H1 (cell line): ENCODE measurements at regions of chr14 and their contacts with region 1.

Region 1: GRCh38 chr14:22200977-22201605 is 387.9 kb downstream of the DAD1 start:
- DNase-seq: no peak
- H3K4me3 ChIP-seq: no peak overlapping the region
- H3K27ac ChIP-seq: no peak overlapping the region
- H3K4me1 ChIP-seq: no peaks in the 10 kb centered on the region; a peak in 1 of 7 replicates
- H3K27me3 ChIP-seq: no peaks in the 10 kb centered on the region
- CTCF ChIP-seq: peak in 2 of 3 experiments; percentile 74 to 85; a peak in 3 of 4 replicates
- EP300 ChIP-seq: no peak
- POLR2A ChIP-seq: no peak
- RAD21 ChIP-seq: peak; percentile 56 to 68

Region 2: GRCh38 chr14:22163051-22163450 is 38.0 kb before region 1 on chr14:
- CTCF ChIA-PET with region 1: interaction called, 19 read pairs
- POLR2A ChIA-PET with region 1: no interaction called
- DNase-seq: no peak
- H3K4me3 ChIP-seq: no peak overlapping the region
- H3K27ac ChIP-seq: no peak overlapping the region
- H3K4me1 ChIP-seq: no peaks in the 10 kb centered on the region; a peak in 2 of 7 replicates
- H3K27me3 ChIP-seq: no peaks in the 10 kb centered on the region
- CTCF ChIP-seq: peak in 2 of 3 experiments; percentile 17 to 34; a peak in 2 of 4 replicates
- EP300 ChIP-seq: no peak
- POLR2A ChIP-seq: no peak
- RAD21 ChIP-seq: peak; percentile 38 to 41; a peak in 3 of 4 replicates

Region 3: GRCh38 chr14:22168092-22168955 is 32.8 kb before region 1 on chr14:
- CTCF ChIA-PET with region 1: interaction called, 19 read pairs
- POLR2A ChIA-PET with region 1: no interaction called
- DNase-seq: no peak
- H3K4me3 ChIP-seq: no peak overlapping the region
- H3K27ac ChIP-seq: no peak overlapping the region
- H3K4me1 ChIP-seq: peaks cover 0 to 6% (median 2%) of the 10 kb centered on the region in 4 experiments; a peak in 3 of 7 replicates
- H3K27me3 ChIP-seq: no peaks in the 10 kb centered on the region
- CTCF ChIP-seq: peak in 1 of 3 experiments; percentile 32; a peak in 1 of 4 replicates
- EP300 ChIP-seq: no peak
- POLR2A ChIP-seq: no peak
- RAD21 ChIP-seq: peak in 1 of 2 experiments; percentile 11; a peak in 1 of 4 replicates

Region 4: DNA sequence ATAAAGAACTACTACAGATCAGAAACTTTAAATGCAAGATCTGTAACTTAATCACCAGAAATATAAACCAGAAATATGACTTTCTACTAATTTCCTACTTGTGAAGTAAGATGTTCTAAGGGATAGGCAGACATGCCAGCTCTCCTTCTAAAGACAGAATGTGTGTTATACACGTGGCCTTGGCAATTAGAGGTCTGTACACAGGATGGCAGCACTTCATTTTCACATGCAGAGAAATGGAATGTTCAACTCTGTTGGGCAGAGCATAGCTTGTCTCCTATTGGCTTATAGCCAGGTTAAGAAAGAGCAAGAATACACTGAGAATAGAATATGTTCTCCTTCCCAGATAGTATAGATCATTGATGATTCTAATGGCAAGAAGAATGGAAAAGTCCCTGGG is 15.9 kb before region 1 on chr14:
- CTCF ChIA-PET with region 1: interaction called, 10 read pairs
- POLR2A ChIA-PET with region 1: no interaction called
- DNase-seq: no peak
- H3K4me3 ChIP-seq: no peak overlapping the region
- H3K27ac ChIP-seq: no peak overlapping the region
- H3K4me1 ChIP-seq: 0 out of 7 replicates have a peak, but pooled peaks cover 0 to 2% (median 0%) of the 10 kb centered on the region in 4 experiments
- H3K27me3 ChIP-seq: no peaks in the 10 kb centered on the region
- CTCF ChIP-seq: peak in 2 of 3 experiments; percentile 15 to 25; a peak in 2 of 4 replicates
- EP300 ChIP-seq: no peak
- POLR2A ChIP-seq: no peak
- RAD21 ChIP-seq: peak; percentile 8 to 18; a peak in 2 of 4 replicates

Region 5: DNA sequence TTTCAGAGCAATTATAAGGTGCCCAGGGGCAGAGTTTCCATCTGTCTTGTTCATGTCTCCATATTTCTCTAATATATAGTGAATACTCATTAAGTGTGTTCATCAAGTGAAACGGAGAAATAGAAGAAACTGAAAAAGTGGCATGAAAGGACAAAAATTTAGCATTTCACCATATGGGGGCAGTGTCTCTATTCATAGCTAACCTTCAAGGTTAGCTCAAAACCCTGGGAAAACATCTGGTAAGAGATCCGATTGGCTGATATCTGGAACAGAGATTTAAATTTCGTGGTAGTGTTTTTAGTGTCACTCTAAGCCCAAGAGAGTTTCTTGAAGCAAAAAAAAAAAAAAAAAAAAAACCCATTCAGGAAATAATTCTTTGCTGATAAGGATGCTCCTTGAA is 20.4 kb after region 1 on chr14:
- CTCF ChIA-PET with region 1: interaction called, 24 read pairs
- POLR2A ChIA-PET with region 1: no interaction called
- DNase-seq: no peak
- H3K4me3 ChIP-seq: no peak overlapping the region
- H3K27ac ChIP-seq: no peak overlapping the region
- H3K4me1 ChIP-seq: no peaks in the 10 kb centered on the region
- H3K27me3 ChIP-seq: no peaks in the 10 kb centered on the region
- CTCF ChIP-seq: peak in 1 of 3 experiments; percentile 38; a peak in 2 of 4 replicates
- EP300 ChIP-seq: no peak
- POLR2A ChIP-seq: no peak
- RAD21 ChIP-seq: peak in 1 of 2 experiments; percentile 14; a peak in 1 of 4 replicates

Region 6: DNA sequence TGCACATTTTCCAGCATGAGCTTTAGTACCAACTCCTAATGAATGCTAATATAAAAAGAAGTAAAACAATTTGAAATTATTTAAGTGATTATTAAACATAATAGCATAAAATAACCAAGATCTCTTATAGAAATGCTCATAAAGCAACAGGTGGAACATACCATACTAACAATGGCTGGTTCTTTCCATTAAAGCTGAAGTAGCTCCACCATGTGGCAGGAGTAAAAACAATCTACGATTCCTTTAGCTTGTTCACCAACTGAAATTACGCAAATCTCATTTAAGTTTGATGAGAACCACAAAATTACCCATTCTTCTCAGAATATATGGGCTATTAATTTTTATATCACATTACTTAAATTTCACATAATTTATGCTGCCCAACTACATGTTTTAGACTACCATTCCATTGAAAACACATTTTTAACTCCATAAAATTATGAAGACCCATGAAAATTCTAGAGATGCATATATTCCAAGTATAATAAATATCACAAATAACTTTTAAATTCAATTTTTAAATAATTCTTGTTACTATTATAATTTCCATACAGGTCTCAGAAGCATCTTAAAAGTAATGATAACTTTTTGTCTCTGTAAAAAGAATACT is 174.3 kb after region 1 on chr14:
- CTCF ChIA-PET with region 1: interaction called, 15 read pairs
- POLR2A ChIA-PET with region 1: no interaction called
- DNase-seq: no peak
- H3K4me3 ChIP-seq: no peak overlapping the region
- H3K27ac ChIP-seq: no peak overlapping the region
- H3K4me1 ChIP-seq: no peaks in the 10 kb centered on the region
- H3K27me3 ChIP-seq: no peaks in the 10 kb centered on the region
- CTCF ChIP-seq: peak in 2 of 3 experiments; percentile 51 to 55; a peak in 2 of 4 replicates
- EP300 ChIP-seq: no peak
- POLR2A ChIP-seq: no peak
- RAD21 ChIP-seq: peak; percentile 68 to 74

Region 7: GRCh38 chr14:22434030-22434429 is 232.9 kb after region 1 on chr14:
- CTCF ChIA-PET with region 1: no interaction called
- POLR2A ChIA-PET with region 1: no interaction called
- DNase-seq: no peak
- H3K4me3 ChIP-seq: no peak overlapping the region
- H3K27ac ChIP-seq: no peak overlapping the region
- H3K4me1 ChIP-seq: no peaks in the 10 kb centered on the region
- H3K27me3 ChIP-seq: no peaks in the 10 kb centered on the region
- CTCF ChIP-seq: no peak; a peak in 1 of 4 replicates
- EP300 ChIP-seq: no peak
- POLR2A ChIP-seq: no peak
- RAD21 ChIP-seq: peak in 1 of 2 experiments; percentile 6; a peak in 1 of 4 replicates

Region 8: GRCh38 chr14:22748631-22749068 is 547.6 kb after region 1 on chr14:
- CTCF ChIA-PET with region 1: no interaction called
- POLR2A ChIA-PET with region 1: no interaction called
- DNase-seq: no peak
- H3K4me3 ChIP-seq: no peak overlapping the region
- H3K27ac ChIP-seq: no peak overlapping the region
- H3K4me1 ChIP-seq: no peaks in the 10 kb centered on the region
- H3K27me3 ChIP-seq: no peaks in the 10 kb centered on the region
- CTCF ChIP-seq: no peak
- EP300 ChIP-seq: no peak
- POLR2A ChIP-seq: no peak
- RAD21 ChIP-seq: no peak